Heart right ventricle (tissue), 16 donors: ENCODE measurements at regions of chr2 and their contacts with region 1.

Region 1: DNA sequence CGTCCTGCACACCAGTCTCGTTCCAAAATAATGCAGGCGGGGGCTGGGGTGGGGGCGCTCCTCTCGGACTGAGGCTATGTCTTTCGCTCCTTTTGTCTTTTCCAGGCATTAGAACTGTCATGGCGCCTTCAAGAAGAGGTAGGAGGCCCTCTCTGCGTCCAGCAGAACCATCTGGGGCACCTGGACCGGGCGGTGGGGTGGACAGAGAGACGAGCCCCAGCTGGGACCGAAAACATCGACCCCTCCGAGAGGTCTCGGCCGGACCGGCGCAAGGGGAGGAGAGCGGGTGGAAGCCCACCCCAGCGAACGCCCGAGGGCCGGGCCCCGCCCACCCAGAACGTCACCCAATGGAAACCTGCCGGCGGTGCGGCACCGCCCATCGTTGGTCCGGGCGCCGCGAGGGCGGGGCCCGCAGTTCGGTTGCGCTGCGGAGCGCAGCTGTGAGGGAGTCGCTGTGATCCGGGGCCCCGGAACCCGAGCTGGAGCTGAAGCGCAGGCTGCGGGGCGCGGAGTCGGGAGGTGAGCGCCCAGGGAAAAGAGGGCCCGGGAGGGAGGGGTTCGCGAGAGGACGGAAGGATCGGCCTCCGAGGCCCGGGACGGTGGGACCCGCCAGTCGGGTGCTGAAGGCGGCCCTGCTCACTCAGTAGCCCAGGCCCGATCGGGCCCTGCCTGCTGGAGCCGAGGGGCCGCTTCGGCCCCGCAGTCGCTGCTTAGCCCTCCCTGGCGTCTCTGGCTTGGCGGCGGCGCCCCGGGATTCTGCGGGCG is at the start of gene NRBP1:
- DNase-seq: peak; percentile 93 to 96
- ATAC-seq: peak; percentile 96 to 98 (median 98)
- H3K4me3 ChIP-seq: peak within 1 kb of the TSS; percentile 74 to 100 (median 99)
- H3K27ac ChIP-seq: peak within 1 kb of the TSS; percentile 93 to 100 (median 99)
- H3K4me1 ChIP-seq: peaks cover 10 to 48% (median 36%) of the 10 kb centered on the region in 9 donors
- H3K27me3 ChIP-seq: no peaks in the 10 kb centered on the region
- CTCF ChIP-seq: no peak
- total RNA-seq, gene NRBP1: 47.6 to 69.7 (median 59.2) TPM

Region 2: DNA sequence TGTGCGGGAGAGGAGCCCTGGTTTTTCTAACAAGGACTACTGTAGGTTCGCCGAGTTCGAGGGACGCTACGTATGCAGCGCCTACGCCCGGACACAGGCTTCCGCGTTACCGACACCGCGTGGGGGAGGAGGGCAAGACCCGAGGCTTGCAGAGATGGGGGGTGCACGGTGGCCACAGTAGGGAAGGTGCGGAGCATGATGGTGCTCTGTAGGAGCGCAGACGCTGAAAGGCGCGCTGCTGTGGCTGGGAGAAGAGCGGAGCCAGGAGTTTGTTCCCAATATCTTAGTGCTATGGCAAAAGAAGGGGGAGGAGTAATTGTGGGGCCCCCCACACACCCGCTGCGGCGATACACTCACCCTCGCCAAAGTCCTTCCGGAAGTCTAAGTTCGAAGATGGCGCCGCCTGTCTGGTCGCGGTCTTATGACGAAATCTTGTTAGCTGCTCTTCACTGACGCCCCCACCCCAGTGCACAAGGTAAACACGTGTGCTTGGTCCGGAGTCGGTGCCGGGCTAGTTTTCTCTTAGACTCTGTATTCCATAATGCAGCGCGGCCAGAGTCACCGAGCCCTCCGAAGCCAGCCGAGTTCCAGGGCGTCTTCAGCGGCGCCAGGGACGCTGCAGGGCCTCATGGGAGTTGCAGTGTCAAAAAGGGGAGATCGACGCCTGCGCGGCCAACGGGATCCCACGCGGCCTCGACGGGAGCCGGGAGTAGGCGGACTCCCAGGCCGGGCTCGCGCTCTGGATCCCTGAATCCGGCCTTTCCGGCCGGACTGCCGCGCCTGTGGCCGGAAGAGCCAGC is 71.8 kb before region 1 on chr2 and contains the start of gene GTF3C2:
- intact Hi-C with region 1: no loop called
- DNase-seq: peak; percentile 93 to 95
- ATAC-seq: peak; percentile 97 to 99 (median 98)
- H3K4me3 ChIP-seq: peak within 1 kb of the TSS; percentile 68 to 98 (median 85)
- H3K27ac ChIP-seq: peak within 1 kb of the TSS; percentile 83 to 97 (median 90)
- H3K4me1 ChIP-seq: peaks cover 0 to 47% (median 37%) of the 10 kb centered on the region in 9 donors
- H3K27me3 ChIP-seq: no peaks in the 10 kb centered on the region
- CTCF ChIP-seq: peak in 3 of 9 donors; percentile 12 to 17 (median 17)
- total RNA-seq, gene GTF3C2: 21.8 to 30.3 (median 23.6) TPM

Region 3: DNA sequence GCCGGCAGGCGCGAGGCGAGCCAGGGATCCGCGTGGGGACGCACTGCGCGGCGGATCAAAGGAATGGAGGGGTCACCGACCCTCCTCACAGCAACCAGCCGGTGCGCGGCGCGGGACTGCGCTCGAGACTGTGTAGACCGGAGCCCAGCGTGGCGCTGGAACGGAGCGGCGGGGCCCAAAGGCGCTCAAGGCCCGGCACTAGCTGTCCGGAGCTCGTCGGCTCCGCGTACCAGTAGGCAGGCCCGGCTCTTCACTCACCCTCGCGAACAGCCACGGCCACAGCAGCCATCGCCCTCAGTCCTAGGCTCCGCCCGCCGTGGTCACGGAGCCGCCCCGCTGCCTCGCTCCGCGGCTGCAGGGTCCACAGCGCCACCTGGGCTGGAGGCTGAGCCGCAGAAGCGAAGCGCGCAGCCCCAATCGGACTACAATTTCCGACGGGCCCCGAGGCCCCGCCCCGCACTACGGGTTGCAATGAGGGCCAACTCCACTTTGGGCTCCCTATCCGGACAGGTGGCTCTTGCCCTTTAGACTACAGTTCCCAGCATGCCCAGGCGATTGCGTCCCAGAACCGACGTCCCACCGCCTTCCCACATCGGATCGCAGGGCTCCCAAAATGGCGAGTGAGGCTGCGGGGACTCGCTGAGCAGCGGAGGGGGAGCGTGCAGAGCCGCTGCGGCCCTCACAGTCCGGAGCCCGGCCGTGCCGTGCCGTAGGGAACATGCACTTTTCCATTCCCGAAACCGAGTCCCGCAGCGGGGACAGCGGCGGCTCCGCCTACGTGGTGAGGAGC is 58.2 kb before region 1 on chr2 and contains the starts of genes EIF2B4 and SNX17:
- intact Hi-C with region 1: loop called in 1 of 10 experiments (anchors 5 kb)
- DNase-seq: peak; percentile 99 to 100
- ATAC-seq: peak; percentile 94 to 97 (median 96)
- H3K4me3 ChIP-seq: peak within 1 kb of the TSS; percentile 54 to 99 (median 92)
- H3K27ac ChIP-seq: peak within 1 kb of the TSS; percentile 77 to 96 (median 93)
- H3K4me1 ChIP-seq: peaks cover 7 to 39% (median 32%) of the 10 kb centered on the region in 9 donors
- H3K27me3 ChIP-seq: no peaks in the 10 kb centered on the region
- CTCF ChIP-seq: peak; percentile 22 to 95 (median 75)
- total RNA-seq, gene EIF2B4: 26.4 to 47.9 (median 34.7) TPM
- total RNA-seq, gene SNX17: 54.5 to 82.5 (median 68.8) TPM

Region 4: GRCh38 chr2:27380626-27381545 is 47.5 kb before region 1 on chr2 and contains the start of gene ZNF513:
- intact Hi-C with region 1: loop called in 1 of 10 experiments (anchors 1 kb)
- DNase-seq: peak; percentile 97 to 98
- ATAC-seq: peak; percentile 88 to 96 (median 96)
- H3K4me3 ChIP-seq: peak within 1 kb of the TSS; percentile 29 to 72 (median 64)
- H3K27ac ChIP-seq: peak within 1 kb of the TSS; percentile 61 to 93 (median 88)
- H3K4me1 ChIP-seq: peaks cover 5 to 33% (median 17%) of the 10 kb centered on the region in 9 donors
- H3K27me3 ChIP-seq: no peaks in the 10 kb centered on the region
- CTCF ChIP-seq: no peak
- total RNA-seq, gene ZNF513: 4.5 to 11.5 (median 6.8) TPM

Region 5: DNA sequence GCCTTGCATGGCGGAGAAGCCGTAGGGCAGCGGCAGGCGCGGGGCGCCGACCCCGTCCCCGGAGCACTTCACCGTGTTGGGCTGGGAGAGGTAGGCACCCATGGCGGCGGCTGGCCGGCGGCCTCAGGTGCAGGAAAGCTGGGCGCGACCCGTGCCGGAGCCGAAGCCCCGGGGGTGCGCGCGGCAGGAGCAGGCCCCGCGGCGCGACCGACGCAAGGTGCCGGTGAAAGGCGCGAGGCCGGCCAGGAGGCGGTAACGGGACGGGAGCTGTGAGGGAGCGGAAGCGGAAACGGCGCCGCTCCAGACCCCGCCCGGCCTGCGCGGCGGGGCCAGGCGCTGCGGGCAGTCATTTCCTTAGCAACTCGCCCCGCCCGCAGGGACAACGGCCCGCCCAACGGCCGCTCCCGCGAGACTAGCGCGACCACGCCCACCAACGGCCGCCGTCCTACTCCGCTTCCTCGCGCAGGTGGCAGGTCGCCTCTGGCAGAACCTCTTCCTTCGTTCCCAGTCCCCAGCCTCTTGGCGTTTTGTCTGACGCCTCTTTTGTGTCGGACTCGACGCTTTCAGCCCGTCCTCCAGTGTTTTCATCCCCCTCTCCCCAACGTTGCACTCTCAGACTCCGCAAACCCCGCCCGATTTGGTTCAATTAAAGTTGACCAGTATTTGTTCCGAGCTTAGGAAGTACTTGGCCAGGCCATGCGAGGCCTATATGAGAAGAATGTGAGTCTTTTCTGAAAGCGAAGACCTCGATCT is 18.9 kb before region 1 on chr2 and contains the start of gene PPM1G:
- intact Hi-C with region 1: loop called in 4 of 10 experiments (anchors 1 to 2 kb)
- DNase-seq: peak; percentile 94 to 97
- ATAC-seq: peak; percentile 99 to 100 (median 100)
- H3K4me3 ChIP-seq: peak within 1 kb of the TSS; percentile 69 to 100 (median 98)
- H3K27ac ChIP-seq: peak within 1 kb of the TSS; percentile 48 to 95 (median 92)
- H3K4me1 ChIP-seq: peaks cover 7 to 38% (median 28%) of the 10 kb centered on the region in 9 donors
- H3K27me3 ChIP-seq: no peaks in the 10 kb centered on the region
- CTCF ChIP-seq: peak in 2 of 9 donors; percentile 5 to 13
- total RNA-seq, gene PPM1G: 28.4 to 46.1 (median 33.0) TPM

Region 6: DNA sequence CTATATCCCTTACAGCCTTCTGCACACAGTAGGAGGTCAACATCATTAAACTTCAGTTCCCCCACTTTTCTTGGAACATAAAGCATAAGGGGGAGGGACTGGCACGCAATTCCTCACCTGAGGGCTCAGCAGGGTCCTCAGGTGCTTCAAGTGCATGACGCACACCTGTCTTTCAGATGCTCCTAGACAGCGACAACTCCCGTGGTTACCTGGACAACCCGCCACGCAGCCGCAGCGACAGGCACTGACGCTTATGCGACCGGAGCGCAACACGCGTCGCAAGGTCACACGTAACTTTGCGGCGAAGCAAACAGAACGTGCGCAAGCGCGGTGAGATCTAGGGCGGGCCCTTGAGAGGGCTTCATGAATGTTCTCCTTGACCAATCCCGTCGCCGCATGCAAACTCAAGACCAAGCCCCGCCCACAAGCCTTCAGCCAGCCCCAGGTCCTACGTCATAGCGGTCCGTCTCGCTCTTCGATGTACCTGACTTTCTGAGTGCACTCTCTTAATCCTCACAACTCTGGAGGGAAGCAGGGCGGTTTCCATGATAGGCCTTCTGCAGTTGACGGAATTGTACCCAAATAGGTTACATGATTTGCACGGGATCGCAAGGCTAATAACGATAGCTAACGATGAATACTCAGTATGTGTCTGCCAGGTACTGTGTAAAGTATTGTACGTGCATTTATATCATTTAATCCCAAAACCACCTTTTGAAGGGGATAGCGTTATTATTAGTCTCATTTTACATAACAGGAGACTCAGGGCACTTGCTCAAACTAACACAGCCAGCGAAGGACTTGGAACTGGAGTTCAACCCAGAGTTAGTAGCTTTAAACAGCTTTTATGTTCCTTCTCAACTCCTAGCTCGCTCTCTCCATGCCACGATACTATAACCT is 61.4 kb after region 1 on chr2 and contains the start of gene IFT172:
- intact Hi-C with region 1: loop called in 1 of 10 experiments (anchors 5 kb)
- DNase-seq: peak; percentile 97 to 99
- ATAC-seq: peak; percentile 96 to 100 (median 99)
- H3K4me3 ChIP-seq: peak within 1 kb of the TSS; percentile 22 to 96 (median 64)
- H3K27ac ChIP-seq: peak within 1 kb of the TSS in 9 of 10 donors; percentile 53 to 79 (median 63)
- H3K4me1 ChIP-seq: peaks cover 4 to 38% (median 15%) of the 10 kb centered on the region in 9 donors
- H3K27me3 ChIP-seq: peaks cover 0 to 11% (median 0%) of the 10 kb centered on the region in 7 donors
- CTCF ChIP-seq: no peak
- total RNA-seq, gene IFT172: 12.7 to 30.6 (median 16.1) TPM

Region 7: DNA sequence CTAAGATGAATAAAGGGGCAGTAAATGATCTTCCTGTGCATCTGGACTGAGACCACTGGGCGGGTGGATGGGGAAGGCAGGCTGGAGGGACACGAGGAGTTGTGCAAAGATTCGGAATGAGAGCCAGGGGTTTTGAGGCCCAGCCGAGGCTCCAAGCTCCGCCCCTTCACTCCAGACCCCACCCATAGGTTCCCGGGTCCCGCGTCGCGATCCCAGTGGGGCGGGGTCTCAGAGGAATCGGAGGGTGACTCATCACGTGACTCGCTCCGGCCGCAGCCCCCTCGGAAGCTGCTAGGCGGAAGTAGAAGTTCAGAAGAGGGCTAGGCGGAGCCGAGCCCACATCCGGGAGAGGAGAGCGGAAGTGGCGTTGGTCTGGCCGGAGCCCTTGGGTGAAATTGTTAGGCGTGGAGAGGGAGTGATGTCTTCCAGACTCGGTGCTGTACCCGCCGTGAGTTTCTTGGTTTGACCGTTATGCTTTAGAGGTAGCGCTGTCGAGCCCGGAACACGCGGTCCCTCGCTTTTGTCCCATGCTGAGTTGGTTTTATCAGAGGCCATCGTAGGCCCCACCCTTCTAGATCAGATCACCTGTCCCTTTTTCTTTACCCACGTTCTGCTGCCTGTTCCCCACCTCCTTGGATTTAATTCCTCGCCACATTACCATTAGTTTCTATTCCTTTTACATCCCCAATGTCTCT is 154.4 kb after region 1 on chr2 and contains the start of gene ZNF512:
- intact Hi-C with region 1: loop called in 1 of 10 experiments (anchors 10 kb)
- DNase-seq: peak; percentile 89
- ATAC-seq: peak; percentile 95 to 98 (median 97)
- H3K4me3 ChIP-seq: peak within 1 kb of the TSS; percentile 45 to 91 (median 72)
- H3K27ac ChIP-seq: peak within 1 kb of the TSS in 9 of 10 donors; percentile 40 to 85 (median 75)
- H3K4me1 ChIP-seq: peaks cover 0 to 34% (median 20%) of the 10 kb centered on the region in 9 donors
- H3K27me3 ChIP-seq: no peaks in the 10 kb centered on the region
- CTCF ChIP-seq: peak in 1 of 9 donors; percentile 10
- total RNA-seq, gene ZNF512: 15.1 to 27.7 (median 20.3) TPM